ENCODE measurements at regions of chr10 and their contacts with region 1.

Region 1: DNA sequence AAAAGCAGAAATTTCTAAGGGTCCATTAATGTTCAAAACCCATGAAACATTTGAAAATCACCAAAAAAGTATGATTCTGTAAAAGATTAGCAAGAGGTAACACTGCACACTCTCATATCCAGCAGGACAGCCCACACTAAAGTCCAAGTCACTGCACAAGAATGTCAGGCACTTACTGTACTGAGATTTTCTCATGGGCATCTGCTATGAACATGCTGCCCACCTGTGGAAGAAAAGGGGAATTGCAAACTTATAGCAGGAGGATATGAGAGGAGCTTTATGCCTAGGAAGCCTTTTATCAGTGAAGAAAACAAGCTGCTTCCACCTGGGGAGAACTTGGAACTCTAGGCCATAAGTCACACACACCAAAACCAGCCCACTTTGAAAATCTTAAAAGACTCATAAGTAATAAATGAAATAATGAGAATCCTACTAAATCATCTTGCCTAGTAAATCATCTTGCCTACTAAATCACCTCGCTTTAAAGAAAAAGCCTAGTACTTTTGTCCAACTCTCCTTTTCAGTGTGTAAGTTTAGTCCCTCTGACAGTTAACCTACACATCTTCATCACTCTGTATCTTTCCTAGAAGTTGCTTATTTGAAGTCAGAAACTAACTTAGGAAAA is 46.1 kb downstream of the ARMH3 start:
- DNase-seq: peak; percentile 91
- H3K27ac ChIP-seq: no peak overlapping the region
- CTCF ChIP-seq: peak; percentile 95

Region 2: GRCh38 chr10:101835064-101835761 is 174.7 kb before region 1 on chr10:
- CTCF ChIA-PET with region 1: interaction called, 67 read pairs
- POLR2A ChIA-PET with region 1: interaction called, 3 read pairs
- DNase-seq: no peak
- H3K27ac ChIP-seq: no peak overlapping the region
- CTCF ChIP-seq: no peak

Region 3: GRCh38 chr10:101912561-101913179 is 97.2 kb before region 1 on chr10:
- CTCF ChIA-PET with region 1: no interaction called
- POLR2A ChIA-PET with region 1: no interaction called
- DNase-seq: no peak
- H3K27ac ChIP-seq: no peak overlapping the region
- CTCF ChIP-seq: no peak

Region 4: GRCh38 chr10:101995451-101996063 is 14.4 kb before region 1 on chr10:
- CTCF ChIA-PET with region 1: interaction called, 11 read pairs
- POLR2A ChIA-PET with region 1: no interaction called
- DNase-seq: no peak
- H3K27ac ChIP-seq: no peak overlapping the region
- CTCF ChIP-seq: no peak

Measured in RWPE1 (cell line).